ENCODE measurements at regions of chr15 and their contacts with region 1.

Region 1: DNA sequence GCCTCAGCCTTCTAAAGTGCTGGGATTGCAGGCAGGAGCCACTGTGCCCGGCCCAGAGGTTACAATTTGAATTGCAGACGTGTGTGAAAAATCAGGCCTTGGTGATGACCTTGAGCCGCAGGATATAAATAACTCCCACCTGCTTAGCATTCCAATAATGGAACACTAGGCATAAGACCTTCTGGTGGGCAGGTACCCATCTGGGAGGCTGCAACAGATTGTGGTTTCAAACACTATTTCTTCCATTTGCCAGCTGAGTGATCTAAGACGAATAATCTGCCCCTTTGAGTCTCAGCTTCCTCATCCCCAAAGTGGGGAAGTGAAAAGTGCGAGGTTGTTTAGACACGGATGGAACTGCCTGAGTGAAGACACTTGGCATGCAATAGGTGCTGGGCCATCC is 47.7 kb upstream of the HERC1 start:
- DNase-seq: no peak
- ATAC-seq: no peak
- H3K4me3 ChIP-seq: no peak overlapping the region
- H3K27ac ChIP-seq: no peak overlapping the region
- H3K4me1 ChIP-seq: peaks cover 9% of the 10 kb centered on the region
- H3K27me3 ChIP-seq: no peaks in the 10 kb centered on the region
- CTCF ChIP-seq: no peak
- POLR2A ChIP-seq: no peak

Region 2: GRCh38 chr15:63763476-63764123 is 117.8 kb before region 1 on chr15:
- intact Hi-C with region 1: loop called (anchors 10 kb)
- DNase-seq: no peak
- ATAC-seq: no peak
- H3K4me3 ChIP-seq: no peak overlapping the region
- H3K27ac ChIP-seq: peak overlapping the region in 1 of 4 donors; percentile 5
- H3K4me1 ChIP-seq: peaks cover 25% of the 10 kb centered on the region
- H3K27me3 ChIP-seq: no peaks in the 10 kb centered on the region
- CTCF ChIP-seq: no peak
- POLR2A ChIP-seq: no peak

Region 3: DNA sequence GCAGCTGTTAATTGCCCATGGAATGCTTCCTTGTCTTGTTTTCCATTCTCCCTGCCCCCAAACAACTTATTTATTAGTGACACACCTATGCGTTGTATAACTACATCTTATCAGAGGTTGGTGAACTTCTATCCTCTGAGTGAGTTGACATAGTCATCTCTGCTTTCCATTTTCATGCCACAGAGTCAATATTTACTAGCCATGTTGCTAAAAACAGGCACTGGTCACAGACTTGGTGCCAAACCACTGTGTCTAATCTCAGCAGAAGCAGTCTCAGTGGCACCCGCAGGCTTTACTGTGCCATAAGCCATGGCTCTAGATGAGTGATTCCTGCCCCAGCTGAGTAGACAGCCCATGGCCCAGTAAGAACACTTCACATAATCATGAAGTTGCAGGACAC is 138.3 kb after region 1 on chr15:
- intact Hi-C with region 1: no loop called
- DNase-seq: peak; percentile 63 to 75 (median 70)
- ATAC-seq: peak; percentile 92
- H3K4me3 ChIP-seq: no peak overlapping the region
- H3K27ac ChIP-seq: peak overlapping the region in 3 of 4 donors; percentile 7 to 63 (median 38)
- H3K4me1 ChIP-seq: peaks cover 66% of the 10 kb centered on the region
- H3K27me3 ChIP-seq: no peaks in the 10 kb centered on the region
- CTCF ChIP-seq: no peak
- POLR2A ChIP-seq: peak in 1 of 3 donors; percentile 29